ENCODE measurements at regions of chr11 and their contacts with region 1.

Region 1: DNA sequence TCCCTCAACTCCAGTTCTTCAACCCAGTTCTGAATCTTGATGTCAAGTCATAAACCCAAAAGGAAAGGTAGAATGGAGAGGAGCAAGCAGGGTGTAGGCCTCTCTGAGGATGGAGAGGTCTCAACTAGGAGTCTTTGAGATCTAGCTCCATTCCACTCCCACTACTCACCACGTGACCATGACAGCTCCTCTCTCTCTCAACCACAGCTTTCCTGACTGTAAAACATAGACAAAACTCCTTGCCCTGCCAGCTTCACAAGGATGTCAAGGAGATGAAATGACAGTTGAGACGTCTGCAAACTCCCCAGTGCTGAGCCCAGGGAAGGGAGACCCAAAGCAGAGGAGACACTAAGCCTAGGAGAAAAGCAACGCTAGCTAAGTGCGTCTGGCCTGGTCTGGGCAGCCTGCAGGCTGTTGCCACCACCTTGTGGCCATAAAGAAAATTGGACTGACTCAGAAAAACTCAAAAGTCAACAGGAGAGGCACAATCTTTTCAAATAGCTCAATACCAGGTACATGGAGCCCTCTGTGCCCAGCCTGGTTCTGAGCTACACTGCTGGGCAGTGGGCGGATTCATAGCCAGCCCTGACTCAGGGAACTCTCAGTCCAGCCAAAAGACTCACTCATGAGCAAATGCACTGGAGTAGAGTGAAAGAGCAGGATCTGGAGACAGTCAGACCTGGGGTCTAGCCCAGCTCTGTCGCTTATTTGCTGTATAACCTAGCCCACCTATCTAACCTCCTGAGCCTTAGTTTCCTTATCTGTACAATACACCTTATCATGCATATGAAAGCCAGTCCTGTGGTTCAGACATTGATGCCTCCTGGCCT is 3.4 kb downstream of the CLPB start:
- DNase-seq: peak; percentile 72
- CTCF ChIP-seq: peak; percentile 74

Region 2: GRCh38 chr11:72030472-72031045 is 400.4 kb before region 1 on chr11:
- CTCF ChIA-PET with region 1: interaction called, 16 read pairs
- POLR2A ChIA-PET with region 1: interaction called, 3 read pairs
- DNase-seq: no peak
- CTCF ChIP-seq: no peak

Region 3: GRCh38 chr11:72189461-72190275 is 241.3 kb before region 1 on chr11:
- CTCF ChIA-PET with region 1: interaction called, 13 read pairs
- POLR2A ChIA-PET with region 1: no interaction called
- DNase-seq: no peak
- CTCF ChIP-seq: no peak

Region 4: DNA sequence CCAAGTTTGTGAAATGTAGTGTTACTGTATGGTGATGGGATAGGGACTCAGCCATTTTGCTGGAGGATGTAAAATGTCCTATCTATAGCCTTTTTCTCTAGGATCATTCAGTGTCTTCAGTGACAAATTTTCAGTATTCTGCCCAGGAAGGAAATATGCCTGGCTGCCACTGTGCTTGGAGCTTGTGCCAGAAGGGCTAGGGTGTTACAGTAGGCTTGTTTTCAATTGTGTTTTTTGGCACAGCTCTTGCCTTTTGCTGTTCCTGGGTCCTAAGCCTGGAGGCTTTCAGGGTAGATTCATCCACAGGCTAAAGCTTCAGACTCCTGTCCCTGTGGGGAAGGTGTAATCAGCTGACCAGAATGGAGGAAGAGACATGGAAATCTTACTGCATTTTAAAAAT is 165.0 kb before region 1 on chr11:
- CTCF ChIA-PET with region 1: interaction called, 17 read pairs
- POLR2A ChIA-PET with region 1: no interaction called
- DNase-seq: no peak
- CTCF ChIP-seq: no peak

Region 5: GRCh38 chr11:72396041-72396440 is 34.9 kb before region 1 on chr11:
- CTCF ChIA-PET with region 1: interaction called, 17 read pairs
- POLR2A ChIA-PET with region 1: no interaction called
- DNase-seq: no peak
- CTCF ChIP-seq: no peak

Region 6: GRCh38 chr11:72454791-72455190 is 23.8 kb after region 1 on chr11:
- CTCF ChIA-PET with region 1: interaction called, 10 read pairs
- POLR2A ChIA-PET with region 1: no interaction called
- DNase-seq: no peak
- CTCF ChIP-seq: no peak